Mammary epithelial cell (primary cell): ENCODE measurements at regions of chr3 and their contacts with region 1.

Region 1: GRCh38 chr3:195259475-195260279 is 11.3 kb downstream of the XXYLT1 start:
- DNase-seq: peak; percentile 85
- H3K4me3 ChIP-seq: peak overlapping the region; percentile 57 to 64 (median 60)
- H3K27ac ChIP-seq: peak overlapping the region; percentile 32
- H3K4me1 ChIP-seq: peaks cover 19% of the 10 kb centered on the region
- H3K27me3 ChIP-seq: no peaks in the 10 kb centered on the region
- CTCF ChIP-seq: peak; percentile 51 to 61

Region 2: GRCh38 chr3:194671900-194672808 is 587.5 kb before region 1 on chr3 and contains the start of gene LSG1:
- CTCF ChIA-PET with region 1: interaction called, 3 read pairs
- dilution Hi-C with region 1: no loop called
- in situ Hi-C with region 1: loop called in 1 of 2 experiments (anchors 10 kb)
- intact Hi-C with region 1: loop called (anchors 1 kb)
- DNase-seq: peak; percentile 90
- H3K4me3 ChIP-seq: peak within 1 kb of the TSS; percentile 57 to 96 (median 95)
- H3K27ac ChIP-seq: peak within 1 kb of the TSS; percentile 98
- H3K4me1 ChIP-seq: peaks cover 21% of the 10 kb centered on the region
- H3K27me3 ChIP-seq: no peaks in the 10 kb centered on the region
- CTCF ChIP-seq: no peak
- total RNA-seq, gene LSG1: 33.5 to 33.8 TPM

Region 3: GRCh38 chr3:194964821-194965220 is 294.9 kb before region 1 on chr3:
- CTCF ChIA-PET with region 1: no interaction called
- dilution Hi-C with region 1: no loop called
- in situ Hi-C with region 1: no loop called
- intact Hi-C with region 1: loop called (anchors 1 kb)
- DNase-seq: no peak
- H3K4me3 ChIP-seq: no peak overlapping the region
- H3K27ac ChIP-seq: no peak overlapping the region
- H3K4me1 ChIP-seq: no peaks in the 10 kb centered on the region
- H3K27me3 ChIP-seq: no peaks in the 10 kb centered on the region
- CTCF ChIP-seq: peak; percentile 11 to 45

Region 4: GRCh38 chr3:195133462-195133861 is 126.2 kb before region 1 on chr3:
- CTCF ChIA-PET with region 1: no interaction called
- dilution Hi-C with region 1: no loop called
- in situ Hi-C with region 1: no loop called
- intact Hi-C with region 1: loop called (anchors 10 kb)
- DNase-seq: no peak
- H3K4me3 ChIP-seq: no peak overlapping the region
- H3K27ac ChIP-seq: no peak overlapping the region
- H3K4me1 ChIP-seq: peaks cover 24% of the 10 kb centered on the region
- H3K27me3 ChIP-seq: no peaks in the 10 kb centered on the region
- CTCF ChIP-seq: no peak

Region 5: DNA sequence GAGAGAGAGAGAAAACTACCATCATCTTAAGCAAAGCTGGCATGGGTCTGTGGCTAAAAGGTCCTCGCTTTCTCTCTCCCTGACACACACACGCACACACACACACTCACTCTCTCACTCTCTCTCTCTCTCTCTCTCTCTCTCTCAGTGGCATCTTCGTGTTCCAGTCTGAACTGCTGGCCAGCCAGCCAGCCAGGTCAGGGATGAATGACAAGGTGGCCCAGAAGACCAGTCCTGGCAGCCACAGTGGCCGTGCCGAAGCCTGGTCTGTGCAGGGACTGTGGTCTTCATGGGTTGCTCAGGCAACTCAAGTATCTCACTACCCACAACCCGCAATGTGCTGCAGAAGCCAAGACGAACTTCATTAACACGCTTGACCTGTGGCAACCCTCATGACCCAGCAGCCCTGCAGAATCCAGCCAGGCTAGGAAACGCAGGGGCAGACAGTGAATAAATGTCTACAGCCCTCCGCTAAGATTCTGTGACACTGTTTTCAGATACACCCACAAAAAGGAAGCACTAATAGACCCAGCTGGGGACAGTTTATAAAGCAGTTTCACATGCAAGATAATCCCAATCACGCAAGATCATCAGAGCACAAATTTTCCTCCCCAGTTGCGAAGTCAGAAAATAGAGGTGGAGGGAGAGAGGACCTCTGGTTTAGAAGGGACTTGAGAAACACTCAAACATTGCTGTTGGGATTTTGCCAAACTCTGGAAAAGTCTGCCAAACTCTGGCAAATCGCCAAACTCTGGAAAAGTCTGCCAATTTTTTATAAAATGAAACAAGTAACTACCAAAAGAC is 55.1 kb before region 1 on chr3:
- CTCF ChIA-PET with region 1: no interaction called
- dilution Hi-C with region 1: loop called (anchors 5 kb)
- in situ Hi-C with region 1: no loop called
- intact Hi-C with region 1: no loop called
- DNase-seq: no peak
- H3K4me3 ChIP-seq: no peak overlapping the region
- H3K27ac ChIP-seq: no peak overlapping the region
- H3K4me1 ChIP-seq: peaks cover 6% of the 10 kb centered on the region
- H3K27me3 ChIP-seq: no peaks in the 10 kb centered on the region
- CTCF ChIP-seq: no peak